GM12878 (cell line): ENCODE measurements at regions of chr17 and their contacts with region 1.

Region 1: GRCh38 chr17:49997791-49998703 is 3.0 kb upstream of the DLX3 start:
- DNase-seq: peak; percentile 34
- ATAC-seq: peak; percentile 96
- H3K4me3 ChIP-seq: no peak overlapping the region
- H3K27ac ChIP-seq: no peak overlapping the region
- H3K4me1 ChIP-seq: 0 out of 2 replicates have a peak, but pooled peaks cover 3% of the 10 kb centered on the region
- H3K27me3 ChIP-seq: peaks cover 10 to 28% of the 10 kb centered on the region in 2 experiments
- CTCF ChIP-seq: peak; percentile 89 to 95 (median 91)
- EP300 ChIP-seq: no peak
- POLR2A ChIP-seq: no peak
- RAD21 ChIP-seq: peak; percentile 88

Region 2: DNA sequence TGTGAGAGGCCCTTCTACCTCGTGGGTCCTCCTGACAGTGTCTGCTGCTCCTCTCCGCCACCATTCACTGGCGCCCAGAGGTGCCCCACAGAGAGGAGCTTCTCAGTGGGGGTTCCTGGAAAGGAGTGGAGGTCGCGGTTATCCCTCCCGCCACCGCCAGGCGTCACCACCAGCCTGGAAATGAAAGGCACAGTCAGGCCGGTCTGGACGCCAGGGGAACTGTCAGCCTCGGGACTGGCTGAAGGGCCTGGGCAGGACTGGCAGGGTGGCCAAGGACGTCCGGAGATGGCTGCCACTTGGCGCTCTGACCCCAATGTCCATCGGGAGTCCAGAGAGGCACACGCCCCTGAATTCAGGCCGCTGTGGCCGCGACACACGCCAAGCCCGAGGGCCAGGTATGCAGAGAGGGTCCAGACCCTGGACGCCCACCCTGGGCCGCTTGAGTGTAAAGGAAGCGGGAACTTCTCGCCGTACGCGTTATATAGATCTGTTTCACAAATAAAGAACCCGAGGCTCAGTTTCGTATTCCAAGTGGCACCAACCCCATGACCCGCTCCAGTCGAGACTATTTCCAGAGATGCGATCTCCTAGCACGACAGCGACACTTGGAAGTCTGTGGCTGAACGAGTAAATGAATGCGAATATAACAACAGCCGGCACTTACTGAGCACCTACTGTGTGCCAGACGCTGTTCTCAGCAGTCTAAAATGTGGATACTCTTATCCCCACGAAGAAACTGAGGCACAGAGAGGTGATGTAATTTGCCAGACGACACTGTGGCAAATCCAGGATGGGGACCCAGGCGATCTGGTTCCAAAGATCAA is 430.0 kb before region 1 on chr17:
- CTCF ChIA-PET with region 1: interaction called, 20 read pairs
- POLR2A ChIA-PET with region 1: no interaction called
- RAD21 ChIA-PET with region 1: interaction called, 9 read pairs
- SMC1A ChIA-PET with region 1: interaction called, 4 read pairs
- in situ Hi-C with region 1: loop called (anchors 5 kb)
- intact Hi-C with region 1: loop called (anchors 2 kb)
- DNase-seq: no peak
- ATAC-seq: peak; percentile 80
- H3K4me3 ChIP-seq: no peak overlapping the region
- H3K27ac ChIP-seq: no peak overlapping the region
- H3K4me1 ChIP-seq: peaks cover 13% of the 10 kb centered on the region
- H3K27me3 ChIP-seq: peaks cover 0 to 2% of the 10 kb centered on the region in 2 experiments; a peak in 1 of 4 replicates
- CTCF ChIP-seq: peak; percentile 94 to 97 (median 96)
- EP300 ChIP-seq: no peak
- POLR2A ChIP-seq: no peak
- RAD21 ChIP-seq: peak; percentile 92

Region 3: DNA sequence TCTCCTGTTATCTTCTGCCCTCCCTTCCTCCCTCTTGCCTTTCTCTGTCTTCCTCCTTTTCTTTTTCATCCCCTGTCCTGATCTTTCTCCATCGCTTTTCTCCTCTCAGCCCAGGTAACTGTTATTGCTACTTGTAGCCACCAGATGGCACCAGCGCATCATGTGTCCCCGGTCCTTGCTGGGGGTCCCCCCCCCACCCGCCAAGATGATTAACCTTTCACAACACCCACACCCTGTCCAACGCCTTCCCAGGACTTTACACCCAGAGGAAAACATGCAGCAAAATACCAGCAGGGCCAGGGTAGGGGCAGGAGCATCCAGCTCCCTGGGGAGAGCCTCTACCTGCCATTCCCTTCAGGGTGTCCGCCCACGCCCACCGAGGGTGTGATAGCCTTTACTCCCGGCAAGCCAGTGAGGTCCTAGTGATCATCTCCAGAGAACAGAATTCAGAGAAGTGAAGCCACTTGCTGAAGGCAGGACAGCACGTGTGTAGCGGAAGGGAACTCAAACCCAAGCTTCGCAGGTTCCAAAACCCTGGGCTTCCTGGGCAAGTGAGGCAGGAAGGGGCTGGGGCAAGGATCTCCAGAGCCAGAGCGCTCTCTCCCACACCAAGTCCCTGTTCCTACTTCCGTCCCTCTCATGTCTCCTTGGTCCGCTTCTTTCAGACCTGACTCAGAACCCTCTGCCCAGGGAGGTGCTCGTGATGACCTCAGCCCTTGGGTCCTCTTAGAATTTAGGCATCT is 136.7 kb before region 1 on chr17:
- CTCF ChIA-PET with region 1: interaction called, 103 read pairs
- POLR2A ChIA-PET with region 1: interaction called, 4 read pairs
- RAD21 ChIA-PET with region 1: interaction called, 19 read pairs
- SMC1A ChIA-PET with region 1: interaction called, 20 read pairs
- in situ Hi-C with region 1: loop called (anchors 5 kb)
- intact Hi-C with region 1: loop called (anchors 1 kb)
- DNase-seq: no peak
- ATAC-seq: peak; percentile 75
- H3K4me3 ChIP-seq: no peak overlapping the region
- H3K27ac ChIP-seq: no peak overlapping the region
- H3K4me1 ChIP-seq: no peaks in the 10 kb centered on the region
- H3K27me3 ChIP-seq: no peaks in the 10 kb centered on the region
- CTCF ChIP-seq: peak; percentile 86 to 89 (median 88); a peak in 5 of 6 replicates
- EP300 ChIP-seq: no peak
- POLR2A ChIP-seq: no peak
- RAD21 ChIP-seq: peak; percentile 86

Region 4: GRCh38 chr17:49952209-49952911 is 45.7 kb before region 1 on chr17:
- CTCF ChIA-PET with region 1: interaction called, 84 read pairs
- POLR2A ChIA-PET with region 1: no interaction called
- RAD21 ChIA-PET with region 1: interaction called, 7 read pairs
- SMC1A ChIA-PET with region 1: interaction called, 20 read pairs
- in situ Hi-C with region 1: no loop called
- intact Hi-C with region 1: loop called (anchors 1 kb)
- DNase-seq: no peak
- ATAC-seq: peak; percentile 99
- H3K4me3 ChIP-seq: no peak overlapping the region
- H3K27ac ChIP-seq: no peak overlapping the region
- H3K4me1 ChIP-seq: no peaks in the 10 kb centered on the region
- H3K27me3 ChIP-seq: peaks cover 0 to 2% of the 10 kb centered on the region in 2 experiments; a peak in 3 of 4 replicates
- CTCF ChIP-seq: peak; percentile 78 to 97 (median 96)
- EP300 ChIP-seq: no peak
- POLR2A ChIP-seq: no peak
- RAD21 ChIP-seq: peak; percentile 54

Region 5: GRCh38 chr17:49987681-49988441 is 10.2 kb before region 1 on chr17:
- CTCF ChIA-PET with region 1: interaction called, 15 read pairs
- POLR2A ChIA-PET with region 1: no interaction called
- RAD21 ChIA-PET with region 1: interaction called, 7 read pairs
- SMC1A ChIA-PET with region 1: no interaction called
- in situ Hi-C with region 1: no loop called
- intact Hi-C with region 1: no loop called
- DNase-seq: no peak
- ATAC-seq: no peak
- H3K4me3 ChIP-seq: no peak overlapping the region
- H3K27ac ChIP-seq: no peak overlapping the region
- H3K4me1 ChIP-seq: no peaks in the 10 kb centered on the region
- H3K27me3 ChIP-seq: peaks cover 4 to 13% of the 10 kb centered on the region in 2 experiments; a peak in 3 of 4 replicates
- CTCF ChIP-seq: no peak
- EP300 ChIP-seq: no peak
- POLR2A ChIP-seq: no peak
- RAD21 ChIP-seq: no peak

Region 6: GRCh38 chr17:50055426-50056230 is 57.6 kb after region 1 on chr17 and contains the start of gene ITGA3:
- CTCF ChIA-PET with region 1: interaction called, 15 read pairs
- POLR2A ChIA-PET with region 1: no interaction called
- RAD21 ChIA-PET with region 1: interaction called, 3 read pairs
- SMC1A ChIA-PET with region 1: interaction called, 4 read pairs
- in situ Hi-C with region 1: no loop called
- intact Hi-C with region 1: no loop called
- DNase-seq: no peak
- ATAC-seq: peak; percentile 78
- H3K4me3 ChIP-seq: peak within 1 kb of the TSS; percentile 90
- H3K27ac ChIP-seq: no peak within 1 kb of the TSS
- H3K4me1 ChIP-seq: peaks cover 12% of the 10 kb centered on the region
- H3K27me3 ChIP-seq: no peaks in the 10 kb centered on the region
- CTCF ChIP-seq: no peak
- EP300 ChIP-seq: no peak
- POLR2A ChIP-seq: no peak
- RAD21 ChIP-seq: no peak
- polyA plus RNA-seq, gene ITGA3: 0.29 to 0.86 TPM